Activated T-helper 2 cell treated with anti-CD3 and anti-CD28 coated beads, Interferon-gamma antibody, Interleukin-2, Interleukin-4, amounts not matched to agents 10 μg/mL and 5 μg/mL and 100 μg/mL, durations not matched to agents 14 hours and 24 hours and 36 hours (primary cell): ENCODE measurements at regions of chr2 and their contacts with region 1.

Region 1: DNA sequence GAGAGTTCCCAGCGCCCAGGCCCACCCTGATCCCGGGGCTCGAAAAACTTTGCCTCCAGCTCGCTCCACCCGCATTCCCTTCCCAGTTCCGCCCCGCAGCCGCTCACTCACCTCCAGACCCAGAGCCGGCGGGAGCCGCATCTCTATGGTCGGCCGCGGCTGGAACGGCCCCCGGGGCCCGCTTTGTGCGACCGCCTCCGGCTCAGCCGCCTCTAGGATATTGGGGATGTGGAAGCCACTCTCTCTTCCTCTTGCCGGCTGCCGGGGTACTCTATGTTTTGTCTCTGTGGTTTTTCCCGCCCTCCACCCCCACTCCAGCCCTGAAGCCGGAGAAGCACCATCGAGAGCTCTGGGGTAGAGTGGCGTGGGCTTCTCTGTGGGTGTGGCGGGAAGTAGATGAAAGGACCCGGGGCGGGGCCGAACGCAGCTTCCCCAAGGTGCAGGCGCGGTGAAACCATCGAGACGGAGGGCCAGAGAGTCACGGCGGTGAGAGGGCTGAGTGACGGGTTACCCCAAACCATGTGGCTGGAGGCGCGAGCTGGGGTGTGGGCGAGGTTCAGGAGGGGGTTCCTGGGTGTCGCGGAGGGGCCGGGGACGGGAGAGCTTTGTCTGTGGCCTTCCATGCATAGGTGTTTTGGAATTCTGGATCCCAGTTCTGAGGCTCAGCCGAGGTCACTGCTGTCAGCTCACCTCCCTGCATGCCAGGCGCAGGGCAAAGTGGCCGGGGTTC is at the starts of genes BCS1L and ZNF142:
- DNase-seq: peak; percentile 92
- H3K4me3 Mint-ChIP-seq: peak within 1 kb of the TSS; percentile 91
- H3K27ac Mint-ChIP-seq: peak within 1 kb of the TSS; percentile 82
- H3K4me1 Mint-ChIP-seq: peaks cover 25% of the 10 kb centered on the region
- H3K27me3 Mint-ChIP-seq: no peaks in the 10 kb centered on the region
- total RNA-seq, gene BCS1L: 77.3 and 83.1 TPM in 2 replicates
- total RNA-seq, gene ZNF142: 48.7 and 51.0 TPM in 2 replicates

Region 2: GRCh38 chr2:217890445-217890844 is 769.0 kb before region 1 on chr2:
- intact Hi-C with region 1: no loop called
- DNase-seq: no peak
- H3K4me3 Mint-ChIP-seq: no peak overlapping the region
- H3K27ac Mint-ChIP-seq: no peak overlapping the region
- H3K4me1 Mint-ChIP-seq: peaks cover 2% of the 10 kb centered on the region
- H3K27me3 Mint-ChIP-seq: no peaks in the 10 kb centered on the region

Region 3: DNA sequence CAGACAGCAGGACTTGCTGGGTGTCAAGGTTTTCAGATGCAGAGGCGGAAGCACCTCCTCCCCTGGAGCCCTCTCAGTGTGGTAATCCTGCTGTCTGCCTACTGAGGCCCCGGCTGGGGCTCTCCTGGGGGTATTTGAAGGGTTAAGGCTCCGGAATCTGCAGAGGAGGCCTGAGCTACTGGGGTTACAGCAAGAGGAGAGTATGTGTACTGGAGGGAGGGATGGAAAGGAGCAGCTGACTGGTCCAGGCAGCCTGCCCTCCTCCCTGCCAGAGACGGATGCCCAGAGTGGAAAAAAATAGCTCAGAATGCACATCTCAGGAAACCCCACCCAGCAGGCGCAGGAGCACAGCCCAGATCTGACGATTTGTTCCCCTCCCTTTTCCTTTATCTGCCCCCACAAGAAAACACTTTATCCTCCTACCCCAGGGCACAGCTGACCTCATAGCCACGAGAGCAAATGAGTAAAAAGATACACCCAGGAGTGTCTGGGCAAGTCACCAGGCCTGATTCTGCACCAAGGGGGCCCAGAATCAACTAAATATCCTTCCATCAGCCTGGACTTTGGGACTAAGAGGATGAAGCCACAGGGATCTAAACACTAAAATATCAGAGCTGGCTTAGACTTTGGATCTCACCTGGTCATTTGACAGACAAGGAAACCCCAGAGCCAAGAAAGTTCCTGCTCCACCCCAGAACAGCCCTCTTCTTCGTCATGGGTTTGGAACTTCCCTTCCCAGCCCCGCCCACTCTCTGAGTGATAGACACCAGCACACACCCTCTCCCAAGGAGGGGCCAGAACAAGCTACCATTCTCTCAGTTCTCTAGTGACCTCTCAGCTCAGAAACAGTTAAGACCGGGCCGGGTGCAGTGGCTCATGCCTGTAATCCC is 372.6 kb before region 1 on chr2:
- intact Hi-C with region 1: loop called (anchors 10 kb)
- DNase-seq: peak; percentile 82
- H3K4me3 Mint-ChIP-seq: peak overlapping the region; percentile 85
- H3K27ac Mint-ChIP-seq: peak overlapping the region; percentile 98
- H3K4me1 Mint-ChIP-seq: peaks cover 69% of the 10 kb centered on the region
- H3K27me3 Mint-ChIP-seq: no peaks in the 10 kb centered on the region

Region 4: DNA sequence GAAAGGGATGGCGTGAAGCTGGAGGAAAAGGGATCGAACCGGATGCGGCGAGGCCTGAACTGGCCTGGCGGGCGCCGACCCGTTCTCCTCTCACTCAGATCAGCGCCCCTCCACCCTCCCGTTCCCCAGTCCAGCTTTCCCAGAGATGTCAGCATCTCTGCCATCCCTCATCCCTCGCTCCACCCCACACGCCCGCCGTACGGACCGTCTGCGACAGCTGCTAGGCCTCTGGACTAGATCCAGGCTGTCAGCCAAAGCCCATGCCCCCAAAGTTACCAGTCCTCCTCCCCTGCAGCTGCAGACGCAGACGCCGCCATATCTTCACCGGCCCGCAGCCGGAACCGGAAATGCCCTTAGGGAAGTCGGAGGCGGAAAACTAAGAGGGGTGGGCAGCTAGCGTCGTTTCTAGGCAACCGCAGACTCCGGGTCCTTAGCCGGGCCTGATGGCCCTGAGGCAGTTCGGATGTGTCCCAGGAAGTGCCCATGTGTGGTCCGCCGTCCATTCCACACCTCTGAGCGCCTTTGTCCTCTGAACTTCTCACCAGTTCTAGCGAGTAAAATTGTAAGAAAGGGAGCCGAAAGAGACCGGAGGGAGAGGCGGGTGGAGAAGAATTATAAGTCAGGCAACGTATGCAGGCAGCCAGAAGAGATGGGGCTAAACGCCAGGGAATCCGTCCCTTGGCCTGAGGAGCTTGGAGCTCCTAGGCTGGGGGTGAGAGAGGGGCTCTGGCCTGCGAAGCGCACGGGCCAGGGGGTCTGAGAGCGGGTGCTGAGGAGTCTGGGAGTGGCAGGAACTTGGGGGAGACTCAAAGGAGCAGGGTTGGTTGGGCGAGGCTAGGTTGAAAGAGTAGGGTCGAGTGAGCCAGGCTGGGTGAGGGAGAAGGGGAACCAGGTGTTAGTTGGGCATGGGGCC is 12.5 kb after region 1 on chr2 and contains the starts of genes RNF25 and STK36:
- intact Hi-C with region 1: loop called (anchors 1 kb)
- DNase-seq: peak; percentile 75
- H3K4me3 Mint-ChIP-seq: peak within 1 kb of the TSS; percentile 92
- H3K27ac Mint-ChIP-seq: peak within 1 kb of the TSS; percentile 86
- H3K4me1 Mint-ChIP-seq: peaks cover 21% of the 10 kb centered on the region
- H3K27me3 Mint-ChIP-seq: no peaks in the 10 kb centered on the region
- total RNA-seq, gene RNF25: 21.6 and 25.8 TPM in 2 replicates
- total RNA-seq, gene STK36: 14.4 and 17.9 TPM in 2 replicates

Region 5: GRCh38 chr2:218691234-218691633 is 31.8 kb after region 1 on chr2:
- intact Hi-C with region 1: loop called (anchors 1 kb)
- DNase-seq: no peak
- H3K4me3 Mint-ChIP-seq: no peak overlapping the region
- H3K27ac Mint-ChIP-seq: no peak overlapping the region
- H3K4me1 Mint-ChIP-seq: peaks cover 6% of the 10 kb centered on the region
- H3K27me3 Mint-ChIP-seq: no peaks in the 10 kb centered on the region

Region 6: DNA sequence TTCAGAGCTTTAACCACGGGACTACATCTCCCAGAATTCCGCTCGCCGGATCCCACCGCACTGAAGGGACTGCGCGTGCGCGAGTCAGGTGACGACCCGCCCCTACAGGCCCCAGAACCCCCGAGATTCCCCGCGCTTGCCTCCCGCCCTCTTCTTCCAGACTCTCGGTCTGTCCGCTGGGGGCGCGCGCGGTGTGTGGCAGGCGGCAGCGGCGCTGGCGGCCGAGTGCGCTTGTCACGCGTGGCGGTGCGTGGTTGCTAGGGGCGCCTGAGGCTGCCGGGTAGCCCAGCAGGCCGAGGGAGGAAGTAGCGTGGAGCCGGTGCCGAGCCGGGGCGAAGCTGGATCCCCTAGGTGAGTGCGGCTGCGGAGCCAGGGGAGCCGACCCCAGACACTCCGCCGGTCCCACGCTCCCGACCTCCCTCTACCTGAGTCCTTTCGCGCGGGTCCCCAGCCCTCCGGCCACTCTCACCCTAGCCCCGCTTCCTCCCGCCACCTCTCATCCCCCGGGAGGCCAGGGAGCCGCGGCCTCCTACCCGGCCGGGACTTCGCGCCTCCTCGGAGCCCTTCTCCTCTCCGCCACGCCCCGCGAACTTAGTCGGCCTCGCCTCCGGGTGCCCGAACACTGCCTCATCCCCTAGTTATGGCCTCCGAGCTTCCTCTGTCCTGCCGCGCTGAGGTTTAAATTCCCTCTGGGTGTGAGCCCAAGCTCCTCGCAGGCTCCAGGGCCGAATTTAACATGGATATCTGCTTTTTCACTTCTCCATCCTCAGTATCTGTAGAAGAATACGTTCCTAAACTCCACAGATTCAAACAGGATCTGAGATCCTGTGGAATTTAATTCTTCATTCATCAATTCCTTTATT is 51.5 kb after region 1 on chr2 and contains the start of gene TTLL4:
- intact Hi-C with region 1: loop called (anchors 1 kb)
- DNase-seq: peak; percentile 98
- H3K4me3 Mint-ChIP-seq: peak within 1 kb of the TSS; percentile 95
- H3K27ac Mint-ChIP-seq: peak within 1 kb of the TSS; percentile 84
- H3K4me1 Mint-ChIP-seq: peaks cover 17% of the 10 kb centered on the region
- H3K27me3 Mint-ChIP-seq: peaks cover 1% of the 10 kb centered on the region
- total RNA-seq, gene TTLL4: 55.7 and 64.7 TPM in 2 replicates

Region 7: GRCh38 chr2:218733171-218734021 is 74.0 kb after region 1 on chr2:
- intact Hi-C with region 1: loop called (anchors 2 kb)
- DNase-seq: peak; percentile 16
- H3K4me3 Mint-ChIP-seq: no peak overlapping the region
- H3K27ac Mint-ChIP-seq: peak overlapping the region; percentile 48
- H3K4me1 Mint-ChIP-seq: peaks cover 28% of the 10 kb centered on the region
- H3K27me3 Mint-ChIP-seq: no peaks in the 10 kb centered on the region

Region 8: GRCh38 chr2:218761795-218762194 is 102.4 kb after region 1 on chr2:
- intact Hi-C with region 1: no loop called
- DNase-seq: no peak
- H3K4me3 Mint-ChIP-seq: no peak overlapping the region
- H3K27ac Mint-ChIP-seq: no peak overlapping the region
- H3K4me1 Mint-ChIP-seq: no peaks in the 10 kb centered on the region
- H3K27me3 Mint-ChIP-seq: no peaks in the 10 kb centered on the region